Ascending aorta (tissue), 2 donors: ENCODE measurements at regions of chr7 and their contacts with region 1.

Region 1: DNA sequence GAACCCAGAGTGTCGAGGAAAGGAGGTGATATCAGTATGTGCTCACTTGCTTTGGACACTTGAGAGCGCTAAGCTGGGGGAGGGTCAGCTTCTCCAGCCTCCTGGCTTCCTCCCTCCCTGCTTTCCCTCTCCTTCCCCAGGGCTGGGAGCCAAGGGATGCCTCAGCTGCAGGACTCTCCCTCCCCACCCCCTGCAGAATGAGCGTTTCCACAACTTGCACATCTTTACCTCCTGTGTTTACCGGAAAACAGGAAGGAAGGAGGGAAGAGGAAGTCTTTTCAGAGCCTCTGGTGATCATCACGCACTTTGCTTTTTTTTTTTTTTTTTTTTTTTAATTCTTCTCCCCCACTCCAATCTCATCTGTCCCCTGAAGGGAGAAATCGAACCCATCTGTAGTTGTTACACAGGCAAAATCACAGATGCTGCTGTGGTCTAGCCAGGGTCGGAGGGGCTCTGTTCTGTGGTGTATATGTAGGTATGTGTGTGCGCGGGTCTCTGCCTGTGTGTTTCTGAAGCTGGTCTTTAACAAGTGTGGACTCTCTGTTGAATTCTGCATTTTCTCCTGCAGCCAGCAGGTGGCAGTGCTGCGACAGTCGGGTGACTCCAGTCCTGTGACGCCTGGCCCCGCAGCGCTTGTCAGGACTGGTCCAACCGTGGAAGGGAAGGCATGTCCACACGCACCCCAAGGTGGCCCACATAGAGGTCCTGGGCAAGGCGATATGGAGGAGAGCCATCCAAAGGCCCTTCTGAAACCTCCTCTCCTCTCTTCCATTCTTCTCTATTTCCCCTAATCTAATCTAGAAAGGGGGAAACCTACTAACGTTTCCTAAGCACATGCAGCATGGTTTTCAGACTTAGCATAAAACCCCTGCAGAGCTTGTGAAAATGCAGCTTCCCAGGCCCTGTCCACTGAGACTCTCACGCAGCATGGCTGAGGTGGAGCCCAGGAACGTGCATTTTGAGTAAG is 257.6 kb downstream of the PLXNA4 start:
- DNase-seq: peak; percentile 21 to 89
- H3K4me3 ChIP-seq: no peak overlapping the region
- H3K27ac ChIP-seq: no peak overlapping the region
- H3K4me1 ChIP-seq: peaks cover 0 to 7% of the 10 kb centered on the region in 2 donors
- H3K27me3 ChIP-seq: no peaks in the 10 kb centered on the region
- CTCF ChIP-seq: peak; percentile 82 to 92 (median 88)

Region 2: GRCh38 chr7:132337450-132338080 is 18.9 kb after region 1 on chr7:
- intact Hi-C with region 1: loop called (anchors 2 kb)
- DNase-seq: no peak
- H3K4me3 ChIP-seq: no peak overlapping the region
- H3K27ac ChIP-seq: peak overlapping the region; percentile 20 to 30
- H3K4me1 ChIP-seq: peaks cover 0 to 10% of the 10 kb centered on the region in 2 donors
- H3K27me3 ChIP-seq: no peaks in the 10 kb centered on the region
- CTCF ChIP-seq: no peak

Region 3: GRCh38 chr7:132500727-132501440 is 182.2 kb after region 1 on chr7:
- intact Hi-C with region 1: loop called (anchors 1 kb)
- DNase-seq: peak in 1 of 2 donors; percentile 86
- H3K4me3 ChIP-seq: no peak overlapping the region
- H3K27ac ChIP-seq: no peak overlapping the region
- H3K4me1 ChIP-seq: peaks cover 0 to 8% of the 10 kb centered on the region in 2 donors
- H3K27me3 ChIP-seq: no peaks in the 10 kb centered on the region
- CTCF ChIP-seq: peak; percentile 58 to 66 (median 64)